ENCODE measurements at regions of chr9 and their contacts with region 1.

Region 1: DNA sequence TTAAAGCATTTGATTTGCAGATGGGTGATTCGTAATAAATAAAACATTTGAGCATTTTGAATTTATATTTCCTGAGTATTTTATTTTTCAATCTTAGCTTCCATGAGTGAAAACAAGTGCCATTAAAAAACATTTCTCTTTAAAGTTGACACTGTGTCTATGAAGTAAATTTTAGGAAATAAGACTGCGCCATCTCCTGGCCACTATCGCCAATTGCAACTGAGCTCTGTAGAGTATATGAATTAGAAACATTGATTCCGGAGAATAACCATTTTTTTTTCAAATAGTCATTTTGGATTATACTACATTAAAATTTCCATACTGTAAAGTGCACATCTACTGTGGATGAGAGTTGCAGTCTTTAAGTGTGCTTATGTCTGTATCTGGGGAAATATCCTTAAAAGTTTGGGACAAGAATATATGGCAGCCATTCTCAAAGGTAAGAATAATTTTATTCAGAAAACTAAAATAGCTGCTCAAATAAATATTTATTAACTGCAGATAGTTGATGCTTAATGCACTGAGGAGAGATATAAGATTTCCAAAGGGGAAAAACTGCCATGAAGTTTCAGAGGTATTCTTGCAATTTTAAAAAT is 5.9 kb downstream of the DMRTA1 start:
- DNase-seq: peak in 1 of 2 donors; percentile 55
- ATAC-seq: peak; percentile 50

Region 2: GRCh38 chr9:21812946-21813568 is 639.5 kb before region 1 on chr9:
- intact Hi-C with region 1: loop called in 1 of 2 experiments (anchors 5 kb)
- DNase-seq: peak; percentile 48 to 76
- ATAC-seq: peak; percentile 91

Region 3: GRCh38 chr9:22244141-22245011 is 208.1 kb before region 1 on chr9:
- intact Hi-C with region 1: loop called in 1 of 2 experiments (anchors 10 kb)
- DNase-seq: peak in 1 of 2 donors; percentile 58
- ATAC-seq: peak; percentile 69

Region 4: DNA sequence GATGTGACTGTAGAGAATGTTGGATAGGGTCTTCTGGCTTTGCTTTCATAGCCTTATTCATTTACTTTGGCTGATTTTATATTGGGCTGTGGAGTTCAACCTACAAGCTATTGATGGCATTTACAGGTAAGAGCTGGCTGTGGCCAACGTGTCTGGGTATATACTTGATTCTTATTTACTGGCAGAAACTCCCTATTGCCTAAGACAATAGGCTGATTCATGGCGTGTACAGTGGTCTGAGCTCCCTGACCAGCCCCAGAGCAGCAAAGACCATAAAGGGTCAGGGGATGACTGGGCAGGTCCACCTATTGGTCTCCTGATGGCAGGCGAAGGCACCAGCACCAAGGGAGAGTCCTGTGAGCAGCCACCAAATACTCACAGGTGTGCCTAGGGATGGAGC is 196.1 kb before region 1 on chr9:
- intact Hi-C with region 1: no loop called
- DNase-seq: no peak
- ATAC-seq: no peak

Region 5: DNA sequence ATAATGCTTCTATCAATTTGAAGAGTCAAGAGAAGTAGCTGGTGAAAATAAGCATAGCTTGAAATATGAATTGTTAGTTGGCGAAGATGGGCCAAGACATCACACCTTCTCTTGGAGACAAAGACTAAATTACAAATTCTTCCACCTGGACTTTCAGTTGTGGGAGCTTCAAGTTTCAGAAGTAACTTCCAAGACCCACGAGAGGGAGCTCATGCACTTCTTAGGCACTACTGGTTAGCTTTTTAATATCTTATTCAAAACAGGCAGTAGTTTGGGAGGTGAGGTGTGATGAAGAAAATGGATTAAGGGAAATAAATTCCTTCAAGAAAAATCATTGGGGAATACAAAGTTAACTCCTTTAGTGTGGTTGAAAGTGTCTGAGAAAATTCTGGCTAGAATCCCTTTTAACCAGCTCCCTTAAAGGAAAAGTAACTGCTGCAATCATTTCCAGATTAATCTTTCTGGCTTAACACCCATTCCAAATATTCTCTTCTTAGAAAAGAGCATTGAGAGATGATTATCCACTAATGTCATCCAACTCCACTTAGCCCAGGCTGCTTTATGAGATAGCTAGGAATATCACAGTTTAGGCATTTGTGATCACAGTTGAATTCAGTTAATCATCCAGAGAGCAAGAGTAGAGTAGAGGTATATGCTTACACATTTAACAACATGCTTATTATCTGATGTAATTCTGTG is 145.4 kb before region 1 on chr9:
- intact Hi-C with region 1: loop called in 1 of 2 experiments (anchors 5 kb)
- DNase-seq: peak in 1 of 2 donors; percentile 4
- ATAC-seq: peak; percentile 46

Region 6: GRCh38 chr9:23160952-23161469 is 708.5 kb after region 1 on chr9:
- intact Hi-C with region 1: no loop called
- DNase-seq: no peak
- ATAC-seq: no peak